ENCODE measurements at regions of chr19 and their contacts with region 1.

Region 1: GRCh38 chr19:52048555-52049501 is at the start of gene ZNF432:
- DNase-seq: peak; percentile 94
- H3K4me3 ChIP-seq: peak within 1 kb of the TSS; percentile 60 to 89 (median 75)
- H3K27ac ChIP-seq: peak within 1 kb of the TSS; percentile 92
- H3K4me1 ChIP-seq: peaks cover 4% of the 10 kb centered on the region
- H3K27me3 ChIP-seq: no peaks in the 10 kb centered on the region
- CTCF ChIP-seq: no peak
- POLR2A ChIP-seq: no peak
- total RNA-seq, gene ZNF432: 8.9 and 10.9 TPM in 2 replicates

Region 2: DNA sequence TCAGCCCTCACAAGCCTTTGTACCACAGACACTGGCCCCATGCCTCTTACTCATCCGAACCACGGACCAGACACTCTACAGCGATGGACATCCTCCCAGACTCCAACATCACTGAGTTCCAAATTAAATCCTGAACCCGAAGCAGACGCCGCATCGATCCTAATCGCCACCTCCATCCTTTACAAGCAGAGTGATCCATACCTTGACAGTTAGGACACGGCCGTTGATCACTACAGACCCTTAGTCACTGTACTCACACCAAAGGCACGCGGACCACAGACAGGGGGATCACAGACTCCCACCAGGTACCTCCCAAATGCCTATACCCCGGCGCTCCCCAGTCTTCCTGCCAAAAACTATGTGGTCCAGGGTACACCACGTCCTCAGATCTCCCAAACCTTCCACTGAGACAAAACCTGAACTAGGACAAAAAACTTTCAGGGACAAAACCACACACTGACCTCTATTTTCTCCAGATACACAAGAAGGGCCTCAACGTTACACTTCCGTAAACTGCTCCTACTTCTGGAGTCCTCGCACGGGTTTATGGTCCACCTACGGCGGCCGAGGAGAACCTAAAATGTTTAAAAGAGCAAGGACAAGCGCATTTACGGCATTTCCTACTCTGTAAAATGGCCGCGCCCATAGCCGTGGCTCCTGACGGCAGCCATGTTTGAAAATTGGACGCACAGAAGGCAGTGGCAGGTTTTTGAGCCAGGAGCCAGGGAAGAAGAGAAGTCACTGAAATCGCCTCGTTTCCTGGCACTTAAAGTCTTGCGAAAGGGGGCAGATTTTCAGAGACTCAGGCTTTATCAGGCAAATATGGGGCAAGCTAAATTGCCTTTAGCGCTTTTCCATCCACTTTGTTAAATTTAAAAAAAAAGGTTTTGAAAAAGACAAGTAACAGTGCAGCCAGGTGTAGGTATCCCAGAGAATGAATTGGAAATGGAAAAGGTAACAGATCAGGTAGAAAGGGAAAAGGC is 62.2 kb before region 1 on chr19 and contains the start of gene ZNF350:
- CTCF ChIA-PET with region 1: no interaction called
- POLR2A ChIA-PET with region 1: no interaction called
- dilution Hi-C with region 1: no loop called
- intact Hi-C with region 1: loop called (anchors 2 kb)
- DNase-seq: peak; percentile 95
- H3K4me3 ChIP-seq: peak within 1 kb of the TSS; percentile 58 to 80 (median 61)
- H3K27ac ChIP-seq: peak within 1 kb of the TSS; percentile 48
- H3K4me1 ChIP-seq: peaks cover 2% of the 10 kb centered on the region
- H3K27me3 ChIP-seq: no peaks in the 10 kb centered on the region
- CTCF ChIP-seq: no peak
- POLR2A ChIP-seq: no peak
- total RNA-seq, gene ZNF350: 8.4 and 9.8 TPM in 2 replicates

Region 3: DNA sequence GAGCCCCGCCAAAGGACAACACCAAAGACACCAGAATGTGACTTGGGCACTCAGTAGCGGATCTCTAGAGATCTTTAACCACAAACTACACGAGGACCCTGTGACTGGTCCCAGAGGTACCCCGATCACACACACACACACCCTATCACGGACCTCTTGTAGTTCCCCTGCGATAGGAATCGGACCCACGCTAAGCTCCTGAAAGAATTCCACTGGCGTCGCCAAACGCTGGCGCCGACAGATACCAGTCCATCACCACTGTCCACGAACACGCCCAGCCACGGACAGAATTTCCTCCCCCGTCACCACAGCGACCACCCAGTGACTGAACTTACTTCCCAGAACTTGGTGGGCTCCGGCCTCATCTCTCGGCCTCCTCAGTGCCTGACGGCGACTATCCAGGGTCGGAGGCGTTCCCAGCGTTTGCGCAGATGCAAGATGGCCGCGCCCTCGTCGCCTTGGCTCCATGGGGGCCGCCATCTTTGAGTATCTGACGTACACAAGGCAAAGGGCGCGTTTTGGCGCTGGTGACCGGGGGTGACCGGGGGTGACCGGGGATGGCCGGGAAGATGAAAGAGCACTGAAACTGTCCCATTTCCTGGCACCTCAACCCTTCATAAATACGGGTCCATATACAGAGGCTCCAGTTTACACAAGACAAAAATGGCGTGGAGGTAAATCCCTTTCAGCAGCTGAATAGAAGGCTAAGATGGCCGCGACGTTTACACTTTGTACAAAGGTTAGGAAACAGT is 40.8 kb before region 1 on chr19 and contains the start of gene ZNF615:
- CTCF ChIA-PET with region 1: no interaction called
- POLR2A ChIA-PET with region 1: no interaction called
- dilution Hi-C with region 1: no loop called
- intact Hi-C with region 1: loop called (anchors 1 kb)
- DNase-seq: peak; percentile 91
- H3K4me3 ChIP-seq: peak within 1 kb of the TSS; percentile 57 to 76 (median 69)
- H3K27ac ChIP-seq: peak within 1 kb of the TSS; percentile 83
- H3K4me1 ChIP-seq: peaks cover 7% of the 10 kb centered on the region
- H3K27me3 ChIP-seq: no peaks in the 10 kb centered on the region
- CTCF ChIP-seq: no peak
- POLR2A ChIP-seq: no peak
- total RNA-seq, gene ZNF615: 4.5 and 5.1 TPM in 2 replicates

Region 4: DNA sequence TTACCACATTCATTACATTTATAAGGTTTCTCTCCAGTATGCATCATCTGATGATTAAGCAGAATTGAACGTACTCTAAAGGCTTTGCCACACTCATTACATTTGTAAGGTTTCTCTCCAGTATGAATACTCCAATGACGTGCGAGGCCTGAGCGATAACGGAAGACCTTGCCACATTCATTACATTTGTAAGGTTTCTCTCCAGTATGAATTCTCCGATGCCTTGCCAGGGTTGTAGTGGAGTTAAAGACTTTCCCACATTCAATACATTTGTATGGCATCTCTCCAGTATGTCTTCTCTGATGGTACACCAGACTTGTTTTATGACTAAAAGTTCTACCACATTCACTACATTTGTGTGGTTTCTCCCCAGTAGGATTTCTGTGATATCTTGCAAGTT is 16.6 kb after region 1 on chr19:
- CTCF ChIA-PET with region 1: no interaction called
- POLR2A ChIA-PET with region 1: no interaction called
- dilution Hi-C with region 1: no loop called
- intact Hi-C with region 1: loop called (anchors 1 kb)
- DNase-seq: no peak
- H3K4me3 ChIP-seq: no peak overlapping the region
- H3K27ac ChIP-seq: no peak overlapping the region
- H3K4me1 ChIP-seq: no peaks in the 10 kb centered on the region
- H3K27me3 ChIP-seq: no peaks in the 10 kb centered on the region
- CTCF ChIP-seq: no peak
- POLR2A ChIP-seq: no peak

Region 5: DNA sequence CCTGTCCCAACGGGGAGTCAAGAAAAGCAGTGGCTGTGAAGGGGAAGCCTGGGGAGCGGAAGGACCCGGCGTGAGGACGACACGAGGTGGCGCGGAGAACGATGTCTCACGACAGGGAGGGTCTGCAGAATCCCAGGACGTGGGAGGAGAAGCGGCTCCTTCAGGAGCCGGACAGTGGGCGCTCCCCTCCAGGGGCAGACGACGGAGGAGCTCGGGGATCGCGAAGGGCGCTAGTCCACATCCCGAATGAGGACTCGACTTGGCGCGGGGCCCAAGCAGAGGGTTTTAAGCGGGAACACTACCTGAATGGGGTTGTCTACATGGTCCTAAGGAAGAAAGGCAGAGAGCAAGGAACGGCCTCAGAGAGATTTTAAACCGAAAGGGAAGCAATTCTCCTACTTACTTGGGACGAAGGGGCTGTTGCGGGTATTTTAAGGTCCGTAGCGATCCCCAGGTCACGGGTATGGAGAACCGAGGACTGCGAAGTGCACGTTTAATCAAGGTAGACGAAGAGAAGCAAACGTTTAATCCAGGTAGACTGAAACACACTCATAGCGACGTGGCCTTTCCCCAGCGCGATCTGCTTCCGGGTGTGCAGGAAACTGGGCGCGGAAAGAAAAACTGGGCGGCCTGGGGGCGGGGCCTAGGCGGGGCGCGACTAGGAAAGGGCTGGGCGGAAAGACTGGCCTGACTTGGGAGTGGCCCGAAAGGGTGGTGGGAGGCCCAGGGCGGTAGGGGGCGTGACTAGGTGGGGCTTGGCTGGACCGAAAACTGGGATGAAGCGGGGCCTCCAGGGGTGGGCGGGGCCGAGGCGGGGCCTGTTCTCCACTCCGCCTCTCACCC is 46.6 kb after region 1 on chr19 and contains the start of gene ZNF841:
- CTCF ChIA-PET with region 1: no interaction called
- POLR2A ChIA-PET with region 1: no interaction called
- dilution Hi-C with region 1: no loop called
- intact Hi-C with region 1: loop called (anchors 1 kb)
- DNase-seq: peak; percentile 96
- H3K4me3 ChIP-seq: peak within 1 kb of the TSS; percentile 47 to 94 (median 70)
- H3K27ac ChIP-seq: peak within 1 kb of the TSS; percentile 62
- H3K4me1 ChIP-seq: peaks cover 2% of the 10 kb centered on the region
- H3K27me3 ChIP-seq: no peaks in the 10 kb centered on the region
- CTCF ChIP-seq: no peak
- POLR2A ChIP-seq: peak; percentile 63
- total RNA-seq, gene ZNF841: 17.7 and 18.6 TPM in 2 replicates

Measured in endothelial cell of umbilical vein (primary cell).